ENCODE measurements at regions of chr7 and their contacts with region 1.

Region 1: GRCh38 chr7:94395141-94396036 is 694 bp downstream of the COL1A2 start:
- H3K4me3 ChIP-seq: no peak overlapping the region
- H3K27ac ChIP-seq: no peak overlapping the region
- H3K4me1 ChIP-seq: no peaks in the 10 kb centered on the region
- CTCF ChIP-seq: 0 out of 2 replicates have a peak, but pooled peaks have one; percentile 7

Region 2: GRCh38 chr7:94295850-94296249 is 99.5 kb before region 1 on chr7:
- CTCF ChIA-PET with region 1: interaction called, 74 read pairs
- POLR2A ChIA-PET with region 1: no interaction called
- H3K4me3 ChIP-seq: no peak overlapping the region
- H3K27ac ChIP-seq: no peak overlapping the region
- H3K4me1 ChIP-seq: no peaks in the 10 kb centered on the region
- CTCF ChIP-seq: no peak

Region 3: DNA sequence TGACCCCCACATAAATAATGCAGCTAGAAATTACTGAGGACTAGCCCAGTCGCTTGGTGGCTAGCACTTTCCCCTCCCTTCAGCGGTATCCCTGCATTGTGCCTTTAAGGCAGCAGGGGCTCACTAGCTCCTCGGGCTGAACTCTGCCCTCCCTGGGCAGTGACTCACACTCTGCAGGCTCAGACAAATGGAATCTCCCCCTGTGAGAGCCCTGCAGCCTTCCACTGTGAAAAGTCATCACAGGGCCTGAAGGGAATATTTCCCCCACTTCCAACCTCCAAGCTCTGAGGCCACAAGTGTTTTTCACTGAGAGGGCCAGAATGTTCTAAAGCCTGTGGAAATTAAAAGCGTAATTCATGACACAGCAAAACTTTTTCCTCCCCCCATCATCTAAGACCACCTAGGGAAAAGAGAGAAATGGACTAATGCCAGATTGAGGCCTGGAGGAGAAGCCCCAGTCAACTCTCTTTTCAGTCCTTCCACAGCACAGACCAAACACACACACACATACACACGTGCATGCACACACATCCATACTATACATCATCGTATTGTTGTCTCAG is 94.3 kb before region 1 on chr7:
- CTCF ChIA-PET with region 1: interaction called, 52 read pairs
- POLR2A ChIA-PET with region 1: no interaction called
- H3K4me3 ChIP-seq: no peak overlapping the region
- H3K27ac ChIP-seq: no peak overlapping the region
- H3K4me1 ChIP-seq: no peaks in the 10 kb centered on the region; the same call in 1 of the 2 replicates
- CTCF ChIP-seq: no peak

Measured in HEK293 (cell line).